ENCODE measurements at regions of chr3 and their contacts with region 1.

Region 1: GRCh38 chr3:197674741-197675562 is 61.8 kb downstream of the RUBCN start:
- DNase-seq: no peak
- H3K4me3 ChIP-seq: no peak overlapping the region
- H3K27ac ChIP-seq: no peak overlapping the region
- H3K4me1 ChIP-seq: no peaks in the 10 kb centered on the region
- H3K27me3 ChIP-seq: no peaks in the 10 kb centered on the region
- CTCF ChIP-seq: no peak

Region 2: DNA sequence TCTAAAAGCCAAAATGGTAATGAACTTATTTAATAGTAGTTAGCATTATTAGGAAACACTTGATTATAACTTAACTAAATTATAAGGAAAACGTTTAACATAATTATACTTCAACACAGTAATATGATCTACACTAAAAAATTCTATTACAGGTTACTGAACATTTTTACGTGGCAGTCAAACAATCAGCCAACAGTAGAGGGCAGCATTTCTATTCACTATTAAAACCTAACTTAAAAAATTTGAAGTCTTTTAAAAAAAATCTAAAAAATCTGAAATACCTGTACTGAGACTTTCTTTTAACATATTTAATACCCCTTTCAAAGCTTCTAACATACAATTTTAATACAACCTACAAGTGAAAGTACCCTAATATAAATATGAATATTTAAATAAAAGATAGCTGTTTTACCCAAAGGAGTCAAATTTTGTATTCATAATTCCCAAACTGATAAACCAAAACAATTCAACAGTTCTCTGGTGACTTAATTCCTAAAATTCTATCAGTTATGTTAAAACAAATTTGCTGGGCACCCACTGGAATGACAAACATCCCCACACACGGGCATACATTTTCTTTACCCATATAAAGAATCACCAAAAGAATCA is 418.0 kb before region 1 on chr3:
- CTCF ChIA-PET with region 1: no interaction called
- dilution Hi-C with region 1: loop called (anchors 10 kb)
- in situ Hi-C with region 1: no loop called
- intact Hi-C with region 1: no loop called
- DNase-seq: peak; percentile 24
- H3K4me3 ChIP-seq: no peak overlapping the region
- H3K27ac ChIP-seq: peak overlapping the region; percentile 43
- H3K4me1 ChIP-seq: peaks cover 19% of the 10 kb centered on the region
- H3K27me3 ChIP-seq: no peaks in the 10 kb centered on the region
- CTCF ChIP-seq: peak; percentile 62 to 70

Region 3: GRCh38 chr3:197577366-197578074 is 97.4 kb before region 1 on chr3:
- CTCF ChIA-PET with region 1: no interaction called
- dilution Hi-C with region 1: loop called (anchors 5 kb)
- in situ Hi-C with region 1: no loop called
- intact Hi-C with region 1: no loop called
- DNase-seq: no peak
- H3K4me3 ChIP-seq: no peak overlapping the region
- H3K27ac ChIP-seq: no peak overlapping the region
- H3K4me1 ChIP-seq: peaks cover 8% of the 10 kb centered on the region
- H3K27me3 ChIP-seq: no peaks in the 10 kb centered on the region
- CTCF ChIP-seq: no peak

Region 4: GRCh38 chr3:197590313-197590962 is 84.5 kb before region 1 on chr3:
- CTCF ChIA-PET with region 1: no interaction called
- dilution Hi-C with region 1: no loop called
- in situ Hi-C with region 1: no loop called
- intact Hi-C with region 1: no loop called
- DNase-seq: no peak
- H3K4me3 ChIP-seq: no peak overlapping the region
- H3K27ac ChIP-seq: no peak overlapping the region
- H3K4me1 ChIP-seq: no peaks in the 10 kb centered on the region
- H3K27me3 ChIP-seq: no peaks in the 10 kb centered on the region
- CTCF ChIP-seq: no peak

Region 5: DNA sequence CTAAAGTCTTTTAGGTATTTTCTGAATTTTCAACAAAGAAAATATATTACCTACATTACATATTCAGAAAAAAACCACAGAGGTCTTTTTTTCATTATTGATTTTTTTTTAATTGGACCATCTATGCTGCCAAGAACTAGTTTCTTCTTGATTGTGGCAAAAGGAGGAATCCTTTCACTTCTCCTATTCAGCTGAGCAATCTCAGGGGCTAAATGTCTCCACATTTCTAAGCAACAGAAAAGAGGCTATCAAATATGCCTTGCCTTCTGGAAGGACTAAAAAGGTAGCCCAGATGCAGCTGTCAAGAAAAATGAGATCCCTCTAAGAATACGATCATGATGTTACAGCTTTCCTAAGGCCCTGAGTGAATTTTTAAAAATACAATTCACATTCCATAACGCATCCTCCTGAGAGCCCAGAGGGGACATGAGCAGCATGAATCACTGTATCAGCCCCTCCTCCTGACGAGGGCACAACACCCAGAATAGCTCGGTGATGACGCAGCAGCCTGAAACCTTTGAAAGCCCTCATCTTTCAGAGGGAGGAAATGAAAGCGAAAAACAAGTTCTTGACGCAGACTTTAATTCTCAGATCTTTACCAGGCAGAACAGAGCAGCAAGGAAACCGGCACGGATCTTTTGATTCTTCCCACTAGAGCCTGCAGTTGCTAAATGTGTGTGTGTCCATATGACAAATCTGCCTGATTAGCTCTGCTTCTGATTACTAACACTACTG is 37.2 kb after region 1 on chr3:
- CTCF ChIA-PET with region 1: no interaction called
- dilution Hi-C with region 1: loop called (anchors 5 kb)
- in situ Hi-C with region 1: no loop called
- intact Hi-C with region 1: no loop called
- DNase-seq: peak; percentile 98
- H3K4me3 ChIP-seq: peak overlapping the region; percentile 15 to 57 (median 44)
- H3K27ac ChIP-seq: peak overlapping the region; percentile 99
- H3K4me1 ChIP-seq: peaks cover 16% of the 10 kb centered on the region
- H3K27me3 ChIP-seq: no peaks in the 10 kb centered on the region
- CTCF ChIP-seq: no peak

Region 6: DNA sequence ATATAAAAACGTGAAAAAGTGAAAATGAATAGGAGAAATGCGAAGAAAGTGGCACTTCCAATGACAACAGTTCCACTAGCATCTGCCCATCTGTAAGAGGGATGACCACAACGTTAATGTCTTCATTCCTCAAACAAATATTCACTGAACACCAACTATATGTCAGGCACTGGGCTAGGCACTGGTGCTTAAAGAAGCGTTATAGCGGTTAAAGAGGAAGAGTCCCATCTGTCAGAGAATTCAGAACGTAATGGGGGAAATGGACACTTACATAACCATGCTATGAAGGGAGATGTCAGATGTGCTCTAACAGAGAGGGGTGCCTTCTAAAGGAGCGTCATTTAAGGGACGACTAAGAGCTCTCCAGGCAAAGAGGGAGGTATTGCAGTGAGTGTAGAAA is 53.5 kb after region 1 on chr3:
- CTCF ChIA-PET with region 1: no interaction called
- dilution Hi-C with region 1: no loop called
- in situ Hi-C with region 1: no loop called
- intact Hi-C with region 1: no loop called
- DNase-seq: no peak
- H3K4me3 ChIP-seq: no peak overlapping the region
- H3K27ac ChIP-seq: no peak overlapping the region
- H3K4me1 ChIP-seq: peaks cover 7% of the 10 kb centered on the region
- H3K27me3 ChIP-seq: no peaks in the 10 kb centered on the region
- CTCF ChIP-seq: no peak

Region 7: GRCh38 chr3:197749601-197750395 is 74.8 kb after region 1 on chr3 and contains the start of gene FYTTD1:
- CTCF ChIA-PET with region 1: no interaction called
- dilution Hi-C with region 1: loop called (anchors 10 kb)
- in situ Hi-C with region 1: no loop called
- intact Hi-C with region 1: no loop called
- DNase-seq: peak; percentile 80
- H3K4me3 ChIP-seq: peak within 1 kb of the TSS; percentile 61 to 87 (median 81)
- H3K27ac ChIP-seq: peak within 1 kb of the TSS; percentile 66
- H3K4me1 ChIP-seq: peaks cover 20% of the 10 kb centered on the region
- H3K27me3 ChIP-seq: no peaks in the 10 kb centered on the region
- CTCF ChIP-seq: peak; percentile 18 to 42
- total RNA-seq, gene FYTTD1: 49.0 to 59.6 TPM